ENCODE measurements at regions of chr5 and their contacts with region 1.

Region 1: DNA sequence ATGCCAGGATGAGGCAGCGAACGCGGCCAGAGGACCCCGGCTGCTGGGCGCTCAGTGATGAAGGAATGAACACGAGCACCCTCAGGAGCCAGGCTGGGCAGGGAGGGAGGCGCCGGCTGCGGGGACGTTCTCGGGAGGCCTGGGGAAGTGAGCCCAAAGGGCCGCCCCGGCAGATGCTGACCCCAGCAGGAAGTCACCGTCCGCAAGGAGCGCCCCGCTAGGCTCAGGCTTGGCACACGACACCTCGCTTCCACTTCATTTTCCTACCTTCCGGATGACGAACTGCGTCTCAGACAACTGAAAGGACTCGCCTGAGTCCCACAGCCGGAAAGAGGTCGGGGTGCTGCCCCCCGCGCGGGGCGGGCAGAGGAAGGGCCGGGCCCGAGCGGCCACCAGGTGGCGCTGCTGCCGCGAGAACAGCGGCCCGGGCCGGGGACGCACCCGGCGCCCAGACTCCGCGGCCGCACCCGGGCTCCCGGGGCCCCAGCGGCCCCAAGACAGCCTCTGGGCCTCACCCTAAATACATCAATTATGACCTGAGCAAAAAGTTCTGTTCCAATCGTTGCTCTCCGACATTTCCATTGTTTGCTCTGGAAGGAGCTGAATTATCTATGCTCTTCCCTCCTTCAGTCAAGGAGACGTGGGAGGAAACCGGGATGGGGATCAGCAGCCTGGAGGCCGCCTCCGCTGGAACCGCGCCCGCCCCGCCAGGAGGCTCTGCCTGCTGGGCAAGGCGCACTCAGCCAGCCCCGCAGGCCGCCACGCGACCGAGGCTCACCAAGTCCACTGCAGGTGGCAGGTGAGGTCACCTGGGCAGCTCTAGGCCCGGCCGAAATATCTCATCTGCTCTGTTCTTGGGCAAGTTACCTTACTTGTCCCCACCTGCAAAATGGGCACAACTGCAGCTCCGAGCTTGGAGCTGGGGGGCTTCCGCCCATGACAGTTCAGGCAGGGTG is 107.0 kb downstream of the ZNF354C start:
- DNase-seq: peak; percentile 39 to 54
- ATAC-seq: peak; percentile 67 to 90 (median 80)
- H3K4me3 ChIP-seq: peak overlapping the region in 9 of 10 donors; percentile 15 to 55 (median 39)
- H3K27ac ChIP-seq: peak overlapping the region in 2 of 10 donors; percentile 22 to 40
- H3K4me1 ChIP-seq: peaks cover 0 to 12% (median 7%) of the 10 kb centered on the region in 9 donors
- H3K27me3 ChIP-seq: peaks cover 0 to 22% (median 15%) of the 10 kb centered on the region in 7 donors
- CTCF ChIP-seq: peak; percentile 87 to 100 (median 94)

Region 2: DNA sequence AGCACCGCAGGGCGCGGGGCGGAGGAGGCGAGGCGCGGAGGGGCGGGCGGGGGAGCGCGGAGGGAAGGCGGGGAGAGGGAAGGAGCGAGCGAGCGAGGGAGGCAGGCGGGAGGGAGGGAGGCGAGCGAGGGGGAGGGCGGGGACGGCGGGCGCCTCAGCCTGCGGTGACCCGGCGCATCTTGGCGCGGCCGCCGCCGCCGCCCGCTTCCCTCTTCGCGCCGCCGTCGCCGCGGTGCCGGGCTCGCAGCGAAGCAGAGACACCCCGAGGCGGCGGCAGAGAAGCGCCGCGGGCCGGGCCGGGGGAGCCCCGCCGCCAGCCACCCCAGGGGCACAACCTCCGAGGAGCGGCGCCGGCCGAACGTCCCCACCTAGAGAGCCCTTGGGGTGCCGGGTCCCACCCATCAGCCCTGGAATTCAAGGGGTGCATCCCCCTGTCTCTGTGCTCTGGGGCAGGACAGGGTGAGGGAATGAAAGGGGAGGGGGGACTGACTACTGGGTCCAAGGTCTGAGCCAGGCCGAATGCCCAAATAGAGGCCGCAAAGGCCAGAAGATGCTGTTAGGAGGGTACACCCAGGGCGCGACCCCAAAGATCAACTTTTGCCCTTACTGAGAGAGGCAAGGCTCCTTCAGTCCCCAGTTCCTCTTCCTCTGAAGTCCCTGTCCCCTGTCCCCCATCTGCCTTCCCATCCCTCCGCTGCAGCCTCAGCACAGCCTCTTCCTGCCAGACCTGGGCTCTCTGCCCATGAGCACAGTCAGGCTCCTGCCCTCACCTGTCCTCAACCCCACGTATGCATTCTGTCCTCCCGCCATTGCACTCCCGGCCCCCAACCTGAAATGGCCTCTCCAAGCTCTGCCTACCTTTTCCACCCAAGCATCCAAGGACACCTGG is 178.5 kb after region 1 on chr5 and contains the start of gene ADAMTS2:
- intact Hi-C with region 1: loop called in 9 of 10 experiments (anchors 5 to 10 kb)
- DNase-seq: peak; percentile 43 to 74
- ATAC-seq: peak in 6 of 8 donors; percentile 23 to 74 (median 43)
- H3K4me3 ChIP-seq: peak within 1 kb of the TSS; percentile 32 to 66 (median 60)
- H3K27ac ChIP-seq: peak within 1 kb of the TSS in 6 of 10 donors; percentile 15 to 83 (median 60)
- H3K4me1 ChIP-seq: peaks cover 8 to 46% (median 19%) of the 10 kb centered on the region in 9 donors
- H3K27me3 ChIP-seq: peaks cover 7 to 78% (median 57%) of the 10 kb centered on the region in 7 donors
- CTCF ChIP-seq: peak in 3 of 9 donors; percentile 4 to 27 (median 24)
- total RNA-seq, gene ADAMTS2: 1.7 to 13.5 (median 3.0) TPM

Region 3: DNA sequence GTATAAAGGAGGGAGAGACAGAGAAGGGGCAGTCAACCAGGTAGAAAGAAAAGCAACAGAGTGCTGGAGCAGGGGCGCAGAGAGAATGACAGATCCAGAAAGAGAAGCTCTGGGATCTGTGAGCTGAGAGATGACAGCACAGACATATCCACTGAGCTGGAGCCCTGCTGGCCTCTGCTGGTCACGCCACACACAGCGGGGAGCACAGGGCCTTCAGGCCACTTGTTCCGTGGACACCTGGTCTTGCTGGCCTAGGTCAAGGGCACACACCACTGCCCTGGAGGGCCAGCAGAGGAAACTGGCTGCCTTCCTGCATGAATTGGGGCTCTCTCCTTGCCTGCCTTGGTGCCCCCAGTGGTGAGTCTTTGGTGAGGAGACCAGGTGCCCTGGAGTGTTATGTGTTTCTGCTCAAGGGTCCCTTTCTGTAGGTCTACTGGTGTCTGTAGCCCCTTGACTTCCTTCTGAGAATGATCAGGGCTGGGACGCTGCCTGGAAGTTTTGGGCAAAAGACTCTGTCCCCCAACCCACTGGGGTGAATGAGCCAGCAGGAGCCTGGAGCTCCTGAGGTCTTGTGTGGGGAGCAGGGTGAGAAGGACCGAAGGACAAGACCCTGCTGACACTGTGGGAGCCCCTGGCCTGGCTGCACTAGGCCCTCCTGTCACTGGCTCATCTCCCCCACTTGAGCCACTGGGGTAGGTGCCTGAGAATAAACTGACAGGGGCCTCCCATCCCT is 237.3 kb after region 1 on chr5:
- intact Hi-C with region 1: loop called in 2 of 10 experiments (anchors 1 to 10 kb)
- DNase-seq: no peak
- ATAC-seq: peak in 4 of 8 donors; percentile 44 to 65 (median 56)
- H3K4me3 ChIP-seq: no peak overlapping the region
- H3K27ac ChIP-seq: no peak overlapping the region
- H3K4me1 ChIP-seq: peaks cover 0 to 8% (median 0%) of the 10 kb centered on the region in 9 donors
- H3K27me3 ChIP-seq: peaks cover 0 to 6% (median 0%) of the 10 kb centered on the region in 7 donors
- CTCF ChIP-seq: peak in 8 of 9 donors; percentile 7 to 46 (median 36)

Region 4: DNA sequence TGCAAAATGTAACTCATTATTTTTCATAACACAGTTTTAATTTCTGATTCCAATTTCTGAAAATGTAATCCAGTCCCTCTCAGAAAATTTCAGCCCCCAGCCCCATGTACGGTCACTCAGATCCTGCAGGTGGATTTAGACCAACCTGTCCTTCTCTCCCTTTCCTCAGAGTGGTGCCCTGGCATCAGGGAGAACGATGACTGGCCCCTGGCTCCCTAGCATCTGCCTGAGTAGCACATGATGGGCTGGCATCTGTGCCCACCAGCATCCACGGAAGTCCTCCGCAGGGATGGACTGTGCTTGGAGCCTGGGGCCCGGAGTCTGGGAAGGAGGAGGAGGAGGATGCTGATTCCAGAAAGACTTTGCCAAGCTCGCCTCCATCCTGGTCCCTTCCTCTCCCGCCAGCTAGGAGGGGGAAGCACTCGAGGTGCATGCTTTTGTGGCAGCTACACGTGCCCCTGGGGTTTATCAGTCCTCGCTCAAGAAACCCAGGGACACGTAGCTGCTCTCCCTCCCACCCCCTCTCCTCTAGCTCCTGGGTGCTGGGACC is 328.8 kb after region 1 on chr5:
- intact Hi-C with region 1: loop called (anchors 1 to 2 kb)
- DNase-seq: no peak
- ATAC-seq: no peak
- H3K4me3 ChIP-seq: no peak overlapping the region
- H3K27ac ChIP-seq: no peak overlapping the region
- H3K4me1 ChIP-seq: no peaks in the 10 kb centered on the region
- H3K27me3 ChIP-seq: peaks cover 0 to 34% (median 9%) of the 10 kb centered on the region in 7 donors
- CTCF ChIP-seq: no peak

Region 5: GRCh38 chr5:180557217-180557809 is 1390.1 kb after region 1 on chr5:
- intact Hi-C with region 1: no loop called
- DNase-seq: no peak
- ATAC-seq: no peak
- H3K4me3 ChIP-seq: no peak overlapping the region
- H3K27ac ChIP-seq: no peak overlapping the region
- H3K4me1 ChIP-seq: no peaks in the 10 kb centered on the region
- H3K27me3 ChIP-seq: no peaks in the 10 kb centered on the region
- CTCF ChIP-seq: no peak